Left colon (tissue), 2 donors: ENCODE measurements at regions of chr3 and their contacts with region 1.

Region 1: GRCh38 chr3:47799733-47800132 is 3.2 kb upstream of the DHX30 start:
- DNase-seq: no peak
- ATAC-seq: no peak

Region 2: GRCh38 chr3:47522082-47522987 is 277.4 kb before region 1 on chr3:
- intact Hi-C with region 1: loop called in 1 of 2 experiments (anchors 10 kb)
- DNase-seq: peak; percentile 77 to 85
- ATAC-seq: peak; percentile 97

Region 3: DNA sequence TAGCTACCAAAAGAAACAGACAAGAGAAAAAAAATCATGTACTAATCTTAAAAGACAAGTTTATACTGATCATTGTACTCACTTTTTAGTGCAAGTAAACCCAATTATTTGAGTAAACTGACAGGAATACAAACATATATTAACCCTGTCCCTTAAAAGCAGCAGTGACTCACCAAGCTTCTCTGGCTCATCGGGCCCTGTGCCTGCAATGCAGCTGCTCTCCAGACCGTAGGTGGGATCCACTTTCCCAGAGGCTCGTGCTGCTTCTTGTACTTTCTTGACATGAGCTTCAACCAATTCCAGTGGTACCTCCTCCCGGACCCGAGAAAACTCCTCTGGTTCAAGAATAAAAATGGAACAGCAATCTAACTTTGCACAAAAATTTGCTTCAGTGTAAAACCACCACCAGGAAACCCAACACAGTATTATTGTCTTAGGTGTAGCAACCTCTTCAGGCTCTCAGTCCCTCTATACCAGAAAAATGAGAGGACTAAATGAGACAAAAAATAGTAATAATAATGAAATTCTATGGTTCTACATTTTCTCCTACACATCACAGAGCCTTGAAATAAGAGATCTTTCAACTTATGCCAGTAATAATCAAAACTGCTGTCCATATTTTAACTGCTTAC is 138.5 kb before region 1 on chr3:
- intact Hi-C with region 1: no loop called
- DNase-seq: no peak
- ATAC-seq: no peak

Region 4: DNA sequence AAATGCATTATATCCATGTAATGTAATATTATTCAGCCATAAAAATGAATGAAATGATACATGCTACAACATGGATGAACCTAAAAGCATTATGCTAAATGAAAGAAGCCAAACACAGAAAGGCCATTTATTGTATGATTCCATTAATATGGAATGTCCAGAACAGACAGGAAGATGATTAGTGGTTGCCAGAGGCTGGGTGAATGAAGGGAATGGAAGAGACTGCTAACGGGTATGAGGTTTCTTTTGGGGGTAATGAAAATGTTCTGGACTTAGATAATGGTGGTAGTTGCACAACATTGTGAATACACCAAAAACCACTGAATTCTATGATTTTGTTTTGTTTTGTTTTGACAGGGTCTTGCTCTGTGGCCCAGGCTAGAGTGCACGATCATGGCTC is 278.1 kb after region 1 on chr3:
- intact Hi-C with region 1: no loop called
- DNase-seq: no peak
- ATAC-seq: no peak

Region 5: DNA sequence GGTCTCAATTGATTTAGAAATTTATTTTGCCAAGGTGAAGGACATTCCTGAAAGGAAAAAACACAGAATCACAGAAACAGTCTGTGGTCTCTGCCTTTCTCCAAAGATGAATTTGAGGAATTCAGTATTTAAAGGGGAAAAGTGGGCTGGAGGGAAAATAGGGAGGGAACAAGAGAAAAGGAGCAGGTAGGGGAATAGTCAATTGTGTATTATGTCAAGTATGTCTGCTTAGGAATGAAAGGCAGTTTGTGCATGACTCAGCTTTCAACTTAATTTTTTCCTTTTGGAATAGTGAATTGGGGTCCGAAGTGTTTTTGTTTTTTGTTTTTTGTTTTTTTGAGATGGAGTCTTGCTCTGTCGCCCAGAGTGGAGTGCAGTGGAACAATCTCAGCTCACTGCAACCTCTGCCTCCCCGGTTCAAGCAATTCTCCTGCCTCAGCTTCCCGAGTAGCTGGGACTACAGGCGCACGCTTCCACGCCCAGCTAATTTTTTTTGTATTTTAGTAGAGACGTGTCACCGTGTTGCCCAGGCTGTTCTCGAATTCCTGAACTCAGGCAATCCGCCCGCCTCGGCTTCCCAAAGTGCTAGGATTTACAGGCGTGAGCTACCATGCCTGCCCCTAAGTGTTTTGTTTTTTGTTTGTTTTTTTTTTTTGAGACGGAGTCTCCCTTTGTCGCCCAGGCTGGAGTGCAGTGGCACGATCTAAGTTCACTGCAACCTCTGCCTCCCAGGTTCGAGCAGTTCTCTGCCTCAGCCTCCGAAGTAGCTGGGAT is 290.6 kb after region 1 on chr3:
- intact Hi-C with region 1: no loop called
- DNase-seq: no peak
- ATAC-seq: no peak

Region 6: GRCh38 chr3:48367201-48367600 is 567.5 kb after region 1 on chr3:
- intact Hi-C with region 1: no loop called
- DNase-seq: peak; percentile 28 to 38
- ATAC-seq: peak; percentile 88